ENCODE measurements at regions of chr16 and their contacts with region 1.

Region 1: GRCh38 chr16:74998481-74999218 is at the start of gene ZNRF1:
- DNase-seq: peak; percentile 83
- H3K4me3 Mint-ChIP-seq: peak within 1 kb of the TSS; percentile 81
- H3K27ac Mint-ChIP-seq: peak within 1 kb of the TSS; percentile 86
- H3K4me1 Mint-ChIP-seq: peaks cover 32% of the 10 kb centered on the region
- H3K27me3 Mint-ChIP-seq: peaks cover 18% of the 10 kb centered on the region
- total RNA-seq, gene ZNRF1: 16.1 to 16.3 TPM

Region 2: DNA sequence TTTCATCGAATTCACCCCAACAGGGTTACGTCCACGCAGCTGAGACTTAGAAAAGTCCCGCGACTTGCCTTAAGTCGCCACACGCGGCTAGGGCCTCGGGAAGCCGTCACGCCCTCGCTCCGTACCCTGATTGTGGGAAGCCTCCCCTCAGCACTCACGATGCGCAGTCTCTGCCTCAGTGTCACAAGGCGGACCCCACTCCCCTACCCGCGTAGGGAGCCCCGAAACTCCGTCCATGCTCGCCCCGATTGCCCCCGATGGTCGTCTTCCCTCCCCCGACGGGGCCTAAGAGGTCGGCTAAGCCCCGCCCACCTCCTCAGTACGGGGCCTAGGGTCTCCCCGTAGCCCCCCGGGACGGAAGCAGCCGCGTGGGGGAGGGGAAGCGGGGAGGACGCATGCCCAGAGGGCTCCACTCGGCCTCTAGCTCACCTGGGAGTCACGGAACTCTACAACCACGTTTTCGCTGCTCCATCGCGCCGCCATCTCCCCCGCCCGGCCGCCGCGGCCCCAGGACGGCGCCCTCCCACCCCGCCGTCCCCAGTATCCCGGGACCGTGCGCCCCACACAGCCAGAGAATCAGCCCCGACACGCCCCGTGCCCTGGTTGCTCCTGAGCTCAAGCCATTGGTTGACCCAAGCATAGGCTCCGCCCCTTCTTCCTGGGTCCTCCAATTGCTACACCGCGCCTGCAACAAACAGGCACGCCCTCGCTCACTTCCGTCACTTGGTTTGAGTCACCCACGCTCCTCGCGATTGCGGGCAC is 13.9 kb before region 1 on chr16 and contains the start of gene WDR59:
- CTCF ChIA-PET with region 1: interaction called, 10 read pairs
- POLR2A ChIA-PET with region 1: no interaction called
- DNase-seq: peak; percentile 100
- H3K4me3 Mint-ChIP-seq: peak within 1 kb of the TSS; percentile 91
- H3K27ac Mint-ChIP-seq: peak within 1 kb of the TSS; percentile 92
- H3K4me1 Mint-ChIP-seq: peaks cover 23% of the 10 kb centered on the region
- H3K27me3 Mint-ChIP-seq: no peaks in the 10 kb centered on the region
- total RNA-seq, gene WDR59: 65.8 TPM

Region 3: GRCh38 chr16:75011634-75012307 is 13.1 kb after region 1 on chr16:
- CTCF ChIA-PET with region 1: interaction called, 17 read pairs
- POLR2A ChIA-PET with region 1: no interaction called
- DNase-seq: no peak
- H3K4me3 Mint-ChIP-seq: no peak overlapping the region
- H3K27ac Mint-ChIP-seq: peak overlapping the region; percentile 84
- H3K4me1 Mint-ChIP-seq: peaks cover 29% of the 10 kb centered on the region
- H3K27me3 Mint-ChIP-seq: no peaks in the 10 kb centered on the region

Region 4: DNA sequence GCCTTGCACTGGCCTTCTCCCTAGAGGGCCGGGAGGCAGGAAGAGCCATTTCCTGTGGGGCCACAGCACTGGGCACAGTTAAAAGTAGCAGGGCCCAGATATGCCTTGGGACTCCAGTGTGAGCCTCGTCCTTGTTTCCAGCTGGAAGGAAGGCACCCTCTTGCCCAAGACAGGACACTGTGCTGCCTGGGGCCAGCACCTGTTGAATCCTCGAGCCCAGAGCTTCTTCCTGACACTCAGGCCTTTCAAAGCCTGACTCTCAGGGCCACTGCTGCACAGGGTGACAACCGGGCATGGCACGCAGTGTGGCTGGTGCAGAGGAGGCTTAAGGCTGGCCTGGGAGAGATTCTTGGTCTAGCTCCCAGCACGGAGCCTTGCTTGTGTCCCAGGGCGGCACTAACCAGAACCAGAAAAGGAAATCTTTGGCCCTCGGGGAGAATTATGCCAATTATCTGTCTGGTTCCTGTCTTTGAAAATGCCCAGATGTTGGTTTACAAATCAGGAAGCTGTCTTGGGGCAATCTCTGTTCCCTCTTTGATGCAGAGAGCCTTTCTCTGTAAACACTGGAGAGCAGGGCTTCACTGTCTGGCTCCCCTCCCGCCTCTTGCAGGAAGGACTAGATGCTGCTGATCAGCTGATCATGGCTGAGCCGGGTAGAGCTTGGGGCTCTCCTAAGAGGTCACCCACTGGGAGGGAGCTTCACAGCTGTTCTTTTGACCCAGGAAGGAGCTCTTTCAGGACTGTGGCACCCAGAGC is 106.8 kb after region 1 on chr16:
- CTCF ChIA-PET with region 1: interaction called, 84 read pairs
- POLR2A ChIA-PET with region 1: interaction called, 5 read pairs
- DNase-seq: no peak
- H3K4me3 Mint-ChIP-seq: no peak overlapping the region
- H3K27ac Mint-ChIP-seq: peak overlapping the region; percentile 78
- H3K4me1 Mint-ChIP-seq: peaks cover 75% of the 10 kb centered on the region
- H3K27me3 Mint-ChIP-seq: no peaks in the 10 kb centered on the region

Measured in activated CD4-positive, alpha-beta T cell treated with anti-CD3 and anti-CD28 coated beads, Interleukin-2, amount 10 ng/mL, durations not matched to agents 7 days and 5 days (primary cell).